ENCODE measurements at regions of chr1 and their contacts with region 1.

Region 1: DNA sequence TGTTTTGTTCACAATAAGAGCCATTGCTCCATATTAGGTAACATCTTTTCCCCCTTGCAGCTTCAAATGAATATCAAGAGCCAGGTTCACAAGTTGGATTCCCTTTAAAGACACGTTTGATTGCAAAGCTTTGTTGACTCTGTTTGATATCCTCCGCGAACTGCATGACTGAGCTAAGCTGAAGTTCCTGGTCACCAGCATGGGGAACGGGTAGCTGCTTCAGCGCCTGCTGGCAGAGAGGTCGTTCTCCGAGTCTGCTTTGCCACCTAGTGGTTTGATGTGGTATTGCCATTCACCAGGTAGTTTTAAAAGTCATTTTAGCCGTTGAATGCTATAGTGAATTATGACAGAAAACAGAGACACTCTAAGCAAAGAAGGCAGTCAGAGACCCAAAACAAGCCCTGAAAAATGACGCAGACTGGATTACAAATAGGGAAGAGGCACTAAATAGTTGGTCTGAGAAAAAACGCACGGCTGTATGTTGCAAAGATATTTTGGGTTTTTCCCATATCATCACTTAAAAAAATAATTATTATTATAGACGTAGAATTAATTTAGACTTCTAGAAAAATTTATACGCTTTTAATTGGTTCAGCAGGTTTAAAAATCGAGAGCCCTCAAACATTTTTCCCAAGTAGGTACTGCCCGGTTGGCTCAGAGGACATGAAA is 193.5 kb upstream of the FMN2 start:
- DNase-seq: peak; percentile 71
- H3K4me3 ChIP-seq: no peak overlapping the region; a peak in 1 of 4 replicates
- H3K27ac ChIP-seq: peak overlapping the region in 1 of 2 experiments; percentile 99; a peak in 2 of 4 replicates
- H3K4me1 ChIP-seq: peaks cover 0 to 35% of the 10 kb centered on the region in 2 experiments; a peak in 2 of 4 replicates
- H3K27me3 ChIP-seq: no peaks in the 10 kb centered on the region
- CTCF ChIP-seq: peak; percentile 97
- EP300 ChIP-seq: peak in 1 of 2 experiments; percentile 48; a peak in 1 of 4 replicates
- RAD21 ChIP-seq: peak; percentile 100

Region 2: GRCh38 chr1:239386453-239387303 is 511.5 kb before region 1 on chr1 and contains the start of gene CHRM3:
- CTCF ChIA-PET with region 1: interaction called, 3 read pairs
- POLR2A ChIA-PET with region 1: interaction called, 17 read pairs
- DNase-seq: peak; percentile 89
- H3K4me3 ChIP-seq: peak within 1 kb of the TSS; percentile 49 to 51
- H3K27ac ChIP-seq: peak within 1 kb of the TSS in 1 of 2 experiments; percentile 89; a peak in 2 of 4 replicates
- H3K4me1 ChIP-seq: peaks cover 0 to 15% of the 10 kb centered on the region in 2 experiments; a peak in 2 of 4 replicates
- H3K27me3 ChIP-seq: peaks cover 30% of the 10 kb centered on the region
- CTCF ChIP-seq: no peak
- EP300 ChIP-seq: no peak
- RAD21 ChIP-seq: peak; percentile 65
- polyA plus RNA-seq, gene CHRM3: 0.07 and 0.16 TPM in 2 replicates

Region 3: GRCh38 chr1:239868058-239868832 is 30.0 kb before region 1 on chr1:
- CTCF ChIA-PET with region 1: interaction called, 12 read pairs
- POLR2A ChIA-PET with region 1: interaction called, 4 read pairs
- DNase-seq: peak; percentile 29
- H3K4me3 ChIP-seq: no peak overlapping the region
- H3K27ac ChIP-seq: peak overlapping the region in 1 of 2 experiments; percentile 99; a peak in 2 of 4 replicates
- H3K4me1 ChIP-seq: peaks cover 0 to 43% of the 10 kb centered on the region in 2 experiments; a peak in 2 of 4 replicates
- H3K27me3 ChIP-seq: no peaks in the 10 kb centered on the region
- CTCF ChIP-seq: no peak
- EP300 ChIP-seq: no peak
- RAD21 ChIP-seq: peak; percentile 60

Measured in SK-N-SH (cell line).